ENCODE measurements at regions of chr1 and their contacts with region 1.

Region 1: DNA sequence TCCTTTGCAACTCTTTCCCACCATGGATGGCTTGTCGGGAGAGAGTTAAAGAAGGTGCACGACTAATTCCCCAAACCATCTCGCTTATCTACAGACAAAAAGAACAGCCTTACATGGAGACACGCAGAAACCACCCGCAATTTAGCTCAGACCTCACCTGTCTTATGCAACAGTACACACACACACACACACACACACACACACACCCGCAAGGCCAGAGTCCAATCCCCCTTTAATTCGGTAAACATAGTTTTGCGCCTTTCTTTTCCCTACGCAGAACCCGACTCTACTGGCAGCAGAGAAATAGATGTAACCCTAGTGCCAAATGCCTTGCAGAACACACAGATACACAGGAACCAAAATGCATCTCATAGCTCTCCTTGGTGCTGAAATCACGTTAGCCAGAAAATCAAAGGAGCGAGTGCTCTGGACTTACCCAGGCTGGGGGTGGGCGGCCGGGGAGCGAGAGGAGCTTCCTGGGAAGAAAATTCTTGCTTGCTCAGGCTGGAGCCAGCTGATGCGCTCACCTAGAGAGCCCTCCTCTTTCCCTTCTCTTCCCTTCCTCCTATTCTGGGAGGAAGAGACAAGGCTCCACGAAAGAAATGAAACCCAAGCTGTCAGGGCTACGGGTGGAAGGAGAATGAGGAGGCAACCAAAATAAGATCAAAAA is 470 bp downstream of the TNR start:
- DNase-seq: peak in 1 of 2 experiments; percentile 46
- H3K4me3 ChIP-seq: no peak overlapping the region
- H3K4me3 Mint-ChIP-seq: no peak overlapping the region
- H3K27ac Mint-ChIP-seq: no peak overlapping the region
- H3K4me1 ChIP-seq: no peaks in the 10 kb centered on the region
- H3K4me1 Mint-ChIP-seq: peaks cover 13% of the 10 kb centered on the region
- H3K27me3 ChIP-seq: no peaks in the 10 kb centered on the region
- H3K27me3 Mint-ChIP-seq: peaks cover 12% of the 10 kb centered on the region
- CTCF ChIP-seq: no peak

Region 2: DNA sequence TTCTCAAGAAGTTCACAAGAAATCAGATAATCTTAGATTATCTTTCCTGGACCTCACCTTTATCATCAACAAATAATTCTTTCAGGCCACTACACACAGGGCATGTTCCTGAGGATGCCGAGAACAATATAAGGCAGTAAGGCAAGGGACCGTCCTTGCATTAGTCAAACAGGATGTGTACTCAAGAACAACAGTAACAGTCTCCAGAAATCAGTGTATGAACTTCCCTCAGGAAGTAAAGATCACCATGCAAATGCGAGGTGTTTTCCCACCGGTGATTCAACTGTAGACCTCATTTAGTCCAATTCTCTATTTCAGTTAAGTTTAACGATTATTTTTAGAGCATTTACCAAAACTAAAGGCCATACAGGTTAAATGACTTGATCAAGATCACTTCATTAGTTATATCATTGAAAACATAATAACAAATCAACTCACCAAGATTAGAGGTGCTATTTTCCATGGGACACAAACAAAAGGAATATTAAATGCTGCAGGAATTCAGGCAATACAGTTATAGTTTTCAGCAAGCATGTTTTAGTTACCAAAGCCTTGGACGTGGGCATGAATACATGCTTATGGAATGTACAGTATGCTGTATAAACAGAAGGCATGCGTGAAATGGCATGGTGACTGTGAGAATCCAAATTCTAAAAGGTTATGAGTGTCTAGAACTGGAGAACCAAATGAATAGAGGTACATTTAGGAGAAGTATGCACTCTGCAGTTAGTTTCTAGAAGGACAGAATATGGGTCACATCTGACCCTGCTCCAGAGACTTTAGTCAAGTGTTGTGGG is 144.8 kb before region 1 on chr1:
- CTCF ChIA-PET with region 1: no interaction called
- POLR2A ChIA-PET with region 1: no interaction called
- intact Hi-C with region 1: no loop called
- DNase-seq: no peak
- H3K4me3 ChIP-seq: no peak overlapping the region
- H3K4me3 Mint-ChIP-seq: no peak overlapping the region
- H3K27ac Mint-ChIP-seq: no peak overlapping the region
- H3K4me1 ChIP-seq: no peaks in the 10 kb centered on the region
- H3K4me1 Mint-ChIP-seq: no peaks in the 10 kb centered on the region
- H3K27me3 ChIP-seq: peaks cover 1% of the 10 kb centered on the region; the same call in 1 of the 2 replicates
- H3K27me3 Mint-ChIP-seq: peaks cover 14% of the 10 kb centered on the region
- CTCF ChIP-seq: no peak

Region 3: DNA sequence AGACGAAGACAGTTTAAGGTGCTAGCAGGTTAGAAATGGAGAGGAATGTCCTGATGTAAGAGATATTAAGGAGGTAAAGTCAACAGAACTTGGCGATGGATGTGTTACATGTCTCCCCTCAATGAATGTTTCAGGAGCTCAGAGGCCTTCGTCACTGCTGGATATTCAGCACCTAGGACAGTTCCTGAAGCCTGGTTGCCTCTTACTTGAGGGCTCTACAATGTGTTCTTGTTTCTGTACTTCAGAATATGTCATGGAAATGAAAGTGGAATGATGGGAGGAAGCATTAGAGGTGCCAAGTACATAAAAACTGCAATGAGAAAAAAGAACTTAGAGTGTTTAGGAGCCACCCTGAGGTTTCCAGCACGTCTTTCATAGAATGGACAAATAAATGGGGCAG is 17.2 kb before region 1 on chr1:
- CTCF ChIA-PET with region 1: no interaction called
- POLR2A ChIA-PET with region 1: no interaction called
- intact Hi-C with region 1: loop called (anchors 2 kb)
- DNase-seq: peak in 1 of 2 experiments; percentile 55
- H3K4me3 ChIP-seq: no peak overlapping the region
- H3K4me3 Mint-ChIP-seq: no peak overlapping the region
- H3K27ac Mint-ChIP-seq: no peak overlapping the region
- H3K4me1 ChIP-seq: no peaks in the 10 kb centered on the region
- H3K4me1 Mint-ChIP-seq: no peaks in the 10 kb centered on the region
- H3K27me3 ChIP-seq: no peaks in the 10 kb centered on the region
- H3K27me3 Mint-ChIP-seq: peaks cover 18% of the 10 kb centered on the region
- CTCF ChIP-seq: no peak